PC-9 (cell line): ENCODE measurements at regions of chr1 and their contacts with region 1.

Region 1: DNA sequence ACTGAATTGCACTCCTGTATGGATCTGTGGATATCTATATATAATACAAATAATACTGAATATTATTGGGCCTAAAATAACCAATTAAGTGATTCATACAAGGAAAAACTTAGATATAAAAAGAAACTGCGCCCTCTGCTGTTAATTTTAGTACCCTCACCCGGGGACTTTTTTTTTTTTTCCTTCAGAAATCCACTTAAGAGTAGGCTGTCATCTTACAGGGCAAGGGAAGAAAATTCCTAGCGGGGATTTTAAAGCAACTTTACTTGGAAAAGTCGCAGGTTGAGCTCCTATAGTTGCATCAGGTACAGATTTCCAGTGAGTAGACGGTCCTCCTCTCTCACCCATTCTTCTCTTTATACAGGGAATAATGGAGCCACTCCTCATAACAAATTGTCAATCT is 1.3 kb downstream of the NTNG1 start:
- DNase-seq: peak; percentile 15 to 43
- H3K4me3 ChIP-seq: no peak overlapping the region
- H3K27ac ChIP-seq: no peak overlapping the region
- H3K4me1 ChIP-seq: no peaks in the 10 kb centered on the region
- H3K27me3 ChIP-seq: peaks cover 3% of the 10 kb centered on the region; the same call in 1 of the 2 replicates
- CTCF ChIP-seq: peak; percentile 96

Region 2: DNA sequence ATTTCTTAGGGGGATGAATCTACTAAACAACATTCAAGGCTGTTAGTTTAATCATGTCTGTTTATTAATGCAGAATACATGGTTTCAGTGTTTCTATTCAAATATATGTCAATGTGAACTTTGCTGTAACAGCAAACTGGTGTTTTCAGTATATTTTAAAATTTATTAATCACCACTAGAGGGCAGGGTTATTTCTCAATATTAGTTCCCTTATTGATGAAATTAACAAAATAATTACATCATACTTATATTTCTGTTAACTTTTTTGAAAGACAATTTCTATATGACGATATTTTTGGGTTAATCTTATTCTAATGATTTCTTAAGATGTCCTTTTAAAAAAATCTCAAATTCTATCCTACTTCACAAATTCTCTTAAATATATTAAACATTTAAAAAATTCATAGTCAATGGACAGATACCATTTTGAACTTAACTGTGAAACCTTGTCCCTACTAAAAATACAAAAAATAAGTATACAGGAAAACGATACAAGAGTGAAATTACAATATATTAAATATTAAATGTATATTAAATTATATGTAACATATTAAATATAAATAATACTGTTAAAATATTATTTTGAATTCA is 1119.7 kb before region 1 on chr1:
- CTCF ChIA-PET with region 1: no interaction called
- POLR2A ChIA-PET with region 1: no interaction called
- intact Hi-C with region 1: loop called (anchors 10 kb)
- DNase-seq: no peak
- H3K4me3 ChIP-seq: no peak overlapping the region
- H3K27ac ChIP-seq: no peak overlapping the region
- H3K4me1 ChIP-seq: no peaks in the 10 kb centered on the region
- H3K27me3 ChIP-seq: no peaks in the 10 kb centered on the region
- CTCF ChIP-seq: peak; percentile 88

Region 3: GRCh38 chr1:107196973-107197562 is 54.9 kb after region 1 on chr1:
- CTCF ChIA-PET with region 1: no interaction called
- POLR2A ChIA-PET with region 1: no interaction called
- intact Hi-C with region 1: no loop called
- DNase-seq: peak in 1 of 2 experiments; percentile 52
- H3K4me3 ChIP-seq: no peak overlapping the region
- H3K27ac ChIP-seq: no peak overlapping the region
- H3K4me1 ChIP-seq: no peaks in the 10 kb centered on the region
- H3K27me3 ChIP-seq: no peaks in the 10 kb centered on the region
- CTCF ChIP-seq: peak; percentile 75

Region 4: GRCh38 chr1:107378527-107379270 is 236.6 kb after region 1 on chr1:
- CTCF ChIA-PET with region 1: no interaction called
- POLR2A ChIA-PET with region 1: no interaction called
- intact Hi-C with region 1: no loop called
- DNase-seq: no peak
- H3K4me3 ChIP-seq: no peak overlapping the region
- H3K27ac ChIP-seq: no peak overlapping the region
- H3K4me1 ChIP-seq: no peaks in the 10 kb centered on the region
- H3K27me3 ChIP-seq: no peaks in the 10 kb centered on the region
- CTCF ChIP-seq: no peak